A673 (cell line): ENCODE measurements at regions of chr2 and their contacts with region 1.

Region 1: DNA sequence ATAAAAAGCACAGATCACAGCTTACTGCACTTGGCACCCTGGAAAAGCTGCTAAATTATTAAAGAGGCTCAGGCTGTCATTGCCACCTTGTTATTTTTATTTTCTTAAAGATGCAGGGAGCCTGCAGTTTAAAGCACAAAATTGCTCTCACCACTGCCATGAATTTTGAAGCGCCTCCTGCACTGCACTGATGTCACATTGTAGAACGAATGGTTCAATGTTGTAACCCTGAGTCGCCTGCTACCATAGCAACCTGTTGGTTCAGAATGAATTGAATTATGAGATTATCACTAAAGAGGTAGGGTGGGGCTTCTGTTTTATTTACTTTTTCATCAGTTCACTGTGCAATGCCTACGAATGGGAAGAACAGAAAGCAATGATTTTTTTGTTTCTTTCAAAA is 16.5 kb downstream of the SCG2 start:
- DNase-seq: peak; percentile 82
- H3K4me3 ChIP-seq: peak overlapping the region; percentile 13
- H3K27ac ChIP-seq: no peak overlapping the region
- H3K4me1 ChIP-seq: peaks cover 50% of the 10 kb centered on the region
- H3K27me3 ChIP-seq: no peaks in the 10 kb centered on the region
- CTCF ChIP-seq: no peak

Region 2: GRCh38 chr2:223488814-223489213 is 96.9 kb before region 1 on chr2:
- CTCF ChIA-PET with region 1: no interaction called
- POLR2A ChIA-PET with region 1: no interaction called
- intact Hi-C with region 1: loop called (anchors 5 kb)
- DNase-seq: peak; percentile 72
- H3K4me3 ChIP-seq: no peak overlapping the region
- H3K27ac ChIP-seq: no peak overlapping the region
- H3K4me1 ChIP-seq: peaks cover 42% of the 10 kb centered on the region
- H3K27me3 ChIP-seq: no peaks in the 10 kb centered on the region
- CTCF ChIP-seq: no peak